ENCODE measurements at regions of chr12 and their contacts with region 1.

Region 1: DNA sequence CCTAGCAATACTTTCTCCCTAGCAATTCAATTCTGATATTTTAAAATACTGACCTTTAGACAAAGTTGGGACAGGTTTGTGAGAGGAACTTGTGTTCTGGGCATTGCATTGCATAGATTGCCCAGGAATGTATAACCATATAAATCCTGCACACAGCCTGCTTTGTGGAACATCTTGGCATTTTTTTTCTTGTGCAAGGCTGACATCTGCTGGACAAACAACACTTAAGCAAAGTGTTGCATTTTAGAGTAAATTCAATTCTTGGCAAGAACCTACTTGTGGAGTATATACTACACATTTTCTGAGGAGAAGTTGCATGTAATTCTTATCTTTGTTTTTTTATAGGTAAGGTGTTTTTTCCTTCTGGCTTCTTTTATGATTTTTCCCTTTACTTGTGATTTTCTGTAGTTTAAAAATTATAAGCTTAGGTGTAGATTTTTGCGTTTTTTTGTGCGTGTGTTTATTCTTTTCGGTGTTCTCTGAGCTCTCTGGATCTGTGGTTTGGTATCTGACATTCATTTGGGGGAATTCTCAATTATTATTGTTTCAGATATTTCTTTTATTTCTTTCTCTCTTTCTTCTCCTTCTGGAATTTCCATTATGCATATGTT is 26.4 kb downstream of the TESPA1 start:
- DNase-seq: peak; percentile 43
- CTCF ChIP-seq: peak; percentile 64

Region 2: GRCh38 chr12:53811606-53812005 is 1146.5 kb before region 1 on chr12:
- in situ Hi-C with region 1: no loop called
- DNase-seq: no peak
- CTCF ChIP-seq: no peak

Region 3: DNA sequence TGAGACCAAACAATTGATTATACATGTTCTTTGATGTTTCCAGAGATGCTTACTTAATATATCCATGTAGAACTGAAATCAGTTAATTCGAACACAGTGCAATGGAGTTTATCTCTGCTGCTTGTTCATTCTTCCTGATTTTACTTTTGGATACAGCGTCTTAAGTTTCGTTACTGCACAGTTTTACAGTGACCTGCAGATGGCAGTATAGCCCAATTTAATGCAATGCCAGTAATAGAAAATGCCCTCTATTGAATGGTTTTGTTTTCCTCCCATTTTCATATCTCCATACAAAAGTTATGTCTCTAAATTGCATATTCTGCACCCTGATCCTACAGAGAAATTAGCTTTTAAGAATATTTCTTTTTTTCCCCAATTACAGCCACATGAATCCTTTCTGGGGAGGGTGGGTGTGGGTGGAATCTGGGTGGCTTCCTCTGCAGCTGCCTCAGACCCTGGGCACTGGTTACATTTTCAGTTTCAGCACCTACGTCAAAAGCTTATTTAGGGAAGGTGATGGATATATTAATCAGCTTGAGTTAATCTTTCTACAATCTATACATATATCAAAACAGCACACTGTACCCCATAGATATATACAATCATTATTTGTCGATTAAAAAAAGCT is 208.8 kb before region 1 on chr12:
- in situ Hi-C with region 1: loop called (anchors 25 kb)
- DNase-seq: peak; percentile 51
- CTCF ChIP-seq: peak; percentile 73

Region 4: GRCh38 chr12:54853995-54854566 is 104.1 kb before region 1 on chr12 and contains the start of gene MUCL1:
- in situ Hi-C with region 1: loop called (anchors 10 kb)
- DNase-seq: peak; percentile 45
- CTCF ChIP-seq: peak; percentile 68

Measured in GM13976 (cell line).